Naive thymus-derived CD4-positive, alpha-beta T cell (primary cell): ENCODE measurements at regions of chr1 and their contacts with region 1.

Region 1: DNA sequence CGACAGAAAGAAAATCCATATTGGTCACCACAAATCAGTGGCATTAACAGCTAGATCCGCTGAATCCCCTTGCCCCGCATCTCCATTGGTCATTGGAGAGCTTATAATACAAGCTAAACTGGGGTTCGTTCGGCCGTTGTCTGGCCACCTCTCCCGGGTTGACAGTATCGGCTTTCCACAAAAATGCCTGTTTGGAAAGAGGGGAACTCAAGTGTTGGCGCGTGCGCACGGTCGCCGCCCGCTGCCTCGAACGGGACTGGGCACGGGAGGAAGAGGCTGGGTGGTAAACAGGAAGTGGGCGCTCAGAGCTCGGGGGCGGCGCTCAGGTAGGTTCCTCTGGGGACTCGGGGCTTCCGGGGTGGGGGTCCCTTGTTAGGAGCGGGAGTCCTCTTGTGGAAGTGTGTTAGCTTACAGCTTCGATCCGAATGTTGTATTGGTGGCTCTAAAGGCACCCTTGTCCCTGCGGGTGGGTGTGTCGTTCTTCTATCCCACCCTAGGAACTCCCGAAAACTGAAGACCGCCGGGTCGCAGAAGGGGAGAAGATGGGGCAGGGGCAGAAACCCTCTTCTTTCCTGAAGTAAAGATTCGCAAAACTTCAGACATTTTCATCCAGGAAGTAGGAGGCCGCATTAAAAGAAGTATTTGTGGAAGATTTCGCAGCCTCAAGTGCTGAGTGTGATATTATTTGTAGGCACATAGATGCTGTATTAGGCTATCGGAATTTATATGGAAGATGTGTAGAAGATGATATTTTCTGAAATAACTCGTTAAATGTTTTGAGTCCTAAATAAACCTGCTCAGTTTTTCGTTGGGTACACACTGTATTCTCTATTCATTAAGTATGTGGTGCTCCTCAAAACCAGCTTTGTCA is 962 bp downstream of the BROX start:
- DNase-seq: peak; percentile 76 to 95 (median 93)
- ATAC-seq: peak; percentile 80
- H3K4me3 ChIP-seq: peak overlapping the region; percentile 99
- H3K4me3 Mint-ChIP-seq: peak overlapping the region; percentile 92 to 100 (median 99)
- H3K27ac ChIP-seq: peak overlapping the region; percentile 100
- H3K27ac Mint-ChIP-seq: peak overlapping the region; percentile 97 to 100 (median 99)
- H3K4me1 ChIP-seq: peaks cover 11 to 21% of the 10 kb centered on the region in 2 donors
- H3K4me1 Mint-ChIP-seq: peaks cover 37 to 69% (median 60%) of the 10 kb centered on the region in 7 donors
- H3K27me3 ChIP-seq: no peaks in the 10 kb centered on the region
- H3K27me3 Mint-ChIP-seq: peaks cover 0 to 2% (median 0%) of the 10 kb centered on the region in 5 donors

Region 2: GRCh38 chr1:222589462-222590302 is 123.6 kb before region 1 on chr1 and contains the start of gene TAF1A:
- CTCF ChIA-PET with region 1: no interaction called
- POLR2A ChIA-PET with region 1: interaction called, 16 read pairs
- intact Hi-C with region 1: loop called (anchors 1 kb)
- DNase-seq: peak; percentile 53 to 92 (median 87)
- ATAC-seq: peak; percentile 100
- H3K4me3 ChIP-seq: peak within 1 kb of the TSS; percentile 93
- H3K4me3 Mint-ChIP-seq: peak within 1 kb of the TSS; percentile 86 to 99 (median 96)
- H3K27ac ChIP-seq: peak within 1 kb of the TSS; percentile 85
- H3K27ac Mint-ChIP-seq: peak within 1 kb of the TSS; percentile 94 to 99 (median 97)
- H3K4me1 ChIP-seq: peaks cover 6 to 18% of the 10 kb centered on the region in 2 donors
- H3K4me1 Mint-ChIP-seq: peaks cover 21 to 68% (median 57%) of the 10 kb centered on the region in 7 donors
- H3K27me3 ChIP-seq: no peaks in the 10 kb centered on the region
- H3K27me3 Mint-ChIP-seq: peaks cover 0 to 4% (median 0%) of the 10 kb centered on the region in 5 donors
- total RNA-seq, gene TAF1A: 6.5 to 17.9 (median 9.3) TPM

Region 3: DNA sequence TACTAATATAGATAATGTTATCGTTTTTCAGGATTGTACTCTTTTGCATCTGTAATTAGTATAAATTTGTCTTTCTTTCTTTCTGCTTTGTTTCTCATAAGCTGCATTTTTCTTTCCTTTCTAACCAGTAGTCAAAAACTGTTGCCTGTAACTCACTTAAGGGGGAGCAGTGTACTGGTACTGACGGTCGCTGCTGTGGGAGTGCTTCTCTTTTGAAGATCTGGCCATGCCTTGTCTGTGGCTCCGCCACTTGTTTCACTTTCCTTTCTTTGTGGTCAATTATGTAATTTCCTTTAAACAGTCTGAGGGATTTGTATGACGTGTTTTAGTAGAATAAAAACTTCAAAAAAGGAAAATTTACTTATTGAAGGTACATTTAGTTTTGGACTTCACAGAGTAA is 58.5 kb before region 1 on chr1:
- CTCF ChIA-PET with region 1: interaction called, 5 read pairs
- POLR2A ChIA-PET with region 1: interaction called, 30 read pairs
- intact Hi-C with region 1: loop called (anchors 1 kb)
- DNase-seq: peak in 8 of 9 donors; percentile 62 to 89 (median 83)
- ATAC-seq: peak; percentile 99
- H3K4me3 ChIP-seq: peak overlapping the region; percentile 21
- H3K4me3 Mint-ChIP-seq: peak overlapping the region; percentile 38 to 81 (median 70)
- H3K27ac ChIP-seq: peak overlapping the region; percentile 82
- H3K27ac Mint-ChIP-seq: peak overlapping the region; percentile 85 to 96 (median 94)
- H3K4me1 ChIP-seq: peaks cover 25 to 33% of the 10 kb centered on the region in 2 donors
- H3K4me1 Mint-ChIP-seq: peaks cover 34 to 67% (median 60%) of the 10 kb centered on the region in 7 donors
- H3K27me3 ChIP-seq: no peaks in the 10 kb centered on the region
- H3K27me3 Mint-ChIP-seq: no peaks in the 10 kb centered on the region

Region 4: GRCh38 chr1:222792744-222793143 is 79.4 kb after region 1 on chr1:
- CTCF ChIA-PET with region 1: no interaction called
- POLR2A ChIA-PET with region 1: no interaction called
- intact Hi-C with region 1: no loop called
- DNase-seq: peak in 6 of 9 donors; percentile 7 to 44 (median 27)
- ATAC-seq: no peak
- H3K4me3 ChIP-seq: no peak overlapping the region
- H3K4me3 Mint-ChIP-seq: no peak overlapping the region
- H3K27ac ChIP-seq: no peak overlapping the region
- H3K27ac Mint-ChIP-seq: no peak overlapping the region
- H3K4me1 ChIP-seq: no peaks in the 10 kb centered on the region
- H3K4me1 Mint-ChIP-seq: peaks cover 0 to 17% (median 0%) of the 10 kb centered on the region in 7 donors
- H3K27me3 ChIP-seq: no peaks in the 10 kb centered on the region
- H3K27me3 Mint-ChIP-seq: peaks cover 0 to 2% (median 0%) of the 10 kb centered on the region in 5 donors

Region 5: GRCh38 chr1:223142795-223143536 is 429.6 kb after region 1 on chr1 and contains the start of gene TLR5:
- CTCF ChIA-PET with region 1: no interaction called
- POLR2A ChIA-PET with region 1: interaction called, 10 read pairs
- intact Hi-C with region 1: loop called in 1 of 2 experiments (anchors 1 kb)
- DNase-seq: peak; percentile 81 to 92 (median 87)
- ATAC-seq: peak; percentile 94
- H3K4me3 ChIP-seq: peak within 1 kb of the TSS; percentile 65
- H3K4me3 Mint-ChIP-seq: peak within 1 kb of the TSS; percentile 69 to 89 (median 81)
- H3K27ac ChIP-seq: peak within 1 kb of the TSS; percentile 69
- H3K27ac Mint-ChIP-seq: peak within 1 kb of the TSS in 8 of 9 donors; percentile 48 to 95 (median 90)
- H3K4me1 ChIP-seq: peaks cover 13 to 15% of the 10 kb centered on the region in 2 donors
- H3K4me1 Mint-ChIP-seq: peaks cover 13 to 35% (median 27%) of the 10 kb centered on the region in 7 donors
- H3K27me3 ChIP-seq: no peaks in the 10 kb centered on the region
- H3K27me3 Mint-ChIP-seq: peaks cover 0 to 10% (median 0%) of the 10 kb centered on the region in 5 donors
- total RNA-seq, gene TLR5: 3.1 to 8.0 (median 6.6) TPM in 4 of 5 experiments, not detected in the other

Region 6: GRCh38 chr1:224182866-224183590 is 1469.7 kb after region 1 on chr1 and contains the start of gene DEGS1:
- CTCF ChIA-PET with region 1: no interaction called
- POLR2A ChIA-PET with region 1: no interaction called
- intact Hi-C with region 1: loop called (anchors 2 to 10 kb)
- DNase-seq: peak; percentile 77 to 86 (median 84)
- ATAC-seq: peak; percentile 91
- H3K4me3 ChIP-seq: peak within 1 kb of the TSS; percentile 76
- H3K4me3 Mint-ChIP-seq: peak within 1 kb of the TSS; percentile 78 to 95 (median 90)
- H3K27ac ChIP-seq: peak within 1 kb of the TSS; percentile 92
- H3K27ac Mint-ChIP-seq: peak within 1 kb of the TSS; percentile 90 to 96 (median 93)
- H3K4me1 ChIP-seq: peaks cover 20 to 28% of the 10 kb centered on the region in 2 donors
- H3K4me1 Mint-ChIP-seq: peaks cover 35 to 56% (median 53%) of the 10 kb centered on the region in 7 donors
- H3K27me3 ChIP-seq: no peaks in the 10 kb centered on the region
- H3K27me3 Mint-ChIP-seq: no peaks in the 10 kb centered on the region
- total RNA-seq, gene DEGS1: 35.4 to 86.0 (median 38.3) TPM

Region 7: GRCh38 chr1:224623743-224624333 is 1910.5 kb after region 1 on chr1:
- CTCF ChIA-PET with region 1: no interaction called
- POLR2A ChIA-PET with region 1: no interaction called
- intact Hi-C with region 1: loop called in 1 of 2 experiments (anchors 5 kb)
- DNase-seq: peak in 8 of 9 donors; percentile 70 to 89 (median 83)
- ATAC-seq: peak; percentile 93
- H3K4me3 ChIP-seq: peak overlapping the region; percentile 40
- H3K4me3 Mint-ChIP-seq: peak overlapping the region; percentile 58 to 80 (median 72)
- H3K27ac ChIP-seq: no peak overlapping the region
- H3K27ac Mint-ChIP-seq: peak overlapping the region; percentile 66 to 95 (median 90)
- H3K4me1 ChIP-seq: peaks cover 18 to 25% of the 10 kb centered on the region in 2 donors
- H3K4me1 Mint-ChIP-seq: peaks cover 22 to 47% (median 31%) of the 10 kb centered on the region in 7 donors
- H3K27me3 ChIP-seq: no peaks in the 10 kb centered on the region
- H3K27me3 Mint-ChIP-seq: peaks cover 40 to 45% (median 44%) of the 10 kb centered on the region in 5 donors